ENCODE measurements at regions of chr12 and their contacts with region 1.

Region 1: GRCh38 chr12:3752741-3753486 is at the start of gene CRACR2A:
- DNase-seq: peak; percentile 75 to 85 (median 83)
- ATAC-seq: peak; percentile 90
- H3K4me3 ChIP-seq: peak within 1 kb of the TSS; percentile 77
- H3K4me3 Mint-ChIP-seq: peak within 1 kb of the TSS; percentile 89 to 100 (median 94)
- H3K27ac ChIP-seq: peak within 1 kb of the TSS; percentile 93
- H3K27ac Mint-ChIP-seq: peak within 1 kb of the TSS; percentile 93 to 100 (median 97)
- H3K4me1 ChIP-seq: peaks cover 25 to 34% of the 10 kb centered on the region in 2 donors
- H3K4me1 Mint-ChIP-seq: peaks cover 46 to 70% (median 58%) of the 10 kb centered on the region in 7 donors
- H3K27me3 ChIP-seq: no peaks in the 10 kb centered on the region
- H3K27me3 Mint-ChIP-seq: no peaks in the 10 kb centered on the region
- total RNA-seq, gene CRACR2A: 31.4 to 40.3 (median 39.4) TPM

Region 2: DNA sequence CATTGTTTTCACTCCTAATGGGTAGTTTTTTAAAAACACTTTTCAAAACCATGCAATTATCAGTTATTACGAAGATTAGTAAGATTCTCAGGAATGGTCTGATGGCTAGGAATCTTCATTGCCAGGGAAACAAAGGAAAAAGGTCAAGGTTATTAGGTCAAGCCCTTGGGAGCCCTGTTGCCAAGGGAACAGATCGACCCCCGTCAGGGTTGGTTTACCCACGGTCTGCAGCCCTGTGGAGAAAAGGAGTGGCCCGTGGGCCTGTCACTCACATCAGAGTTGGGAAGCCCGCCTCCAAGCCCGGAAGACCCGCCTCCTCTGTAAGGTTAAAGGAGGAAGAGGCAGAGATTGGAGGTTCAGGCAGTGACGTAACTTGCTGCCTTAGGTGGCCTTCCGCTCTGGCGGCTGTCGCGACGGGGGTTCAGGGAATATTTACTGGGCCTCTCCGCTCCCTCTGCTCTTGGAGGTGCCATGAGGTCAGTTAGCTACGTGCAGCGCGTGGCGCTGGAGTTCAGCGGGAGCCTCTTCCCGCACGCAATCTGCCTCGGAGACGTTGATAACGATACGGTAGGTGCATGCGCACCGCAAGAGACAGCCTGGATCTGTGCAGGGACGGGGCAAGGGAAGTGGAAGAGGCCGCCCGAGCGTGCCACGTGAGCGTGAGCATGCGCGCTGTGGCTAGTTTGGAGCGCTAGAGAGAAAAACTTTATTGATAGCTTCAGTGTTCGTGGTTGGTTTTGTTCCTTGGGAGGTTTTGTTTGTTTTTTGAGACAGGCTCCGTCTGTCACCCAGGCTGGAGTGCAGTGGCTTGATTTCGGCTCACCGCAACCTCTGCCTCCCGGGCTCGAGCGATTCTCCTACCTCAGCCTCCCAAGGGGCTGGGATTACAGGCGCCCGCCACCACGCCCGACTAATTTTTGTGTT is 940.4 kb before region 1 on chr12 and contains the start of gene ITFG2:
- CTCF ChIA-PET with region 1: no interaction called
- POLR2A ChIA-PET with region 1: no interaction called
- intact Hi-C with region 1: loop called in 1 of 2 experiments (anchors 1 kb)
- DNase-seq: peak; percentile 83 to 98 (median 98)
- ATAC-seq: peak; percentile 97
- H3K4me3 ChIP-seq: peak within 1 kb of the TSS; percentile 97
- H3K4me3 Mint-ChIP-seq: peak within 1 kb of the TSS; percentile 81 to 100 (median 99)
- H3K27ac ChIP-seq: peak within 1 kb of the TSS; percentile 88
- H3K27ac Mint-ChIP-seq: peak within 1 kb of the TSS; percentile 97 to 100 (median 100)
- H3K4me1 ChIP-seq: peaks cover 5 to 15% of the 10 kb centered on the region in 2 donors
- H3K4me1 Mint-ChIP-seq: peaks cover 20 to 41% (median 38%) of the 10 kb centered on the region in 7 donors
- H3K27me3 ChIP-seq: no peaks in the 10 kb centered on the region
- H3K27me3 Mint-ChIP-seq: no peaks in the 10 kb centered on the region
- total RNA-seq, gene ITFG2: 50.4 to 156 (median 95.6) TPM

Region 3: GRCh38 chr12:3658327-3659163 is 94.4 kb before region 1 on chr12:
- CTCF ChIA-PET with region 1: no interaction called
- POLR2A ChIA-PET with region 1: interaction called, 3 read pairs
- intact Hi-C with region 1: loop called (anchors 1 to 5 kb)
- DNase-seq: peak in 6 of 9 donors; percentile 12 to 51 (median 35)
- ATAC-seq: peak; percentile 48
- H3K4me3 ChIP-seq: no peak overlapping the region
- H3K4me3 Mint-ChIP-seq: no peak overlapping the region
- H3K27ac ChIP-seq: no peak overlapping the region
- H3K27ac Mint-ChIP-seq: peak overlapping the region in 1 of 9 donors; percentile 58
- H3K4me1 ChIP-seq: no peaks in the 10 kb centered on the region
- H3K4me1 Mint-ChIP-seq: peaks cover 0 to 3% (median 0%) of the 10 kb centered on the region in 7 donors
- H3K27me3 ChIP-seq: no peaks in the 10 kb centered on the region
- H3K27me3 Mint-ChIP-seq: no peaks in the 10 kb centered on the region

Region 4: GRCh38 chr12:3727877-3728632 is 24.9 kb before region 1 on chr12:
- CTCF ChIA-PET with region 1: no interaction called
- POLR2A ChIA-PET with region 1: no interaction called
- intact Hi-C with region 1: loop called (anchors 1 kb)
- DNase-seq: peak in 8 of 9 donors; percentile 17 to 61 (median 36)
- ATAC-seq: peak; percentile 84
- H3K4me3 ChIP-seq: no peak overlapping the region
- H3K4me3 Mint-ChIP-seq: peak overlapping the region in 9 of 10 donors; percentile 34 to 87 (median 52)
- H3K27ac ChIP-seq: no peak overlapping the region
- H3K27ac Mint-ChIP-seq: peak overlapping the region; percentile 52 to 97 (median 79)
- H3K4me1 ChIP-seq: peaks cover 8 to 25% of the 10 kb centered on the region in 2 donors
- H3K4me1 Mint-ChIP-seq: peaks cover 27 to 47% (median 40%) of the 10 kb centered on the region in 7 donors
- H3K27me3 ChIP-seq: no peaks in the 10 kb centered on the region
- H3K27me3 Mint-ChIP-seq: no peaks in the 10 kb centered on the region

Region 5: GRCh38 chr12:4030929-4031702 is 278.2 kb after region 1 on chr12:
- CTCF ChIA-PET with region 1: no interaction called
- POLR2A ChIA-PET with region 1: no interaction called
- intact Hi-C with region 1: loop called in 1 of 2 experiments (anchors 5 kb)
- DNase-seq: peak; percentile 62 to 83 (median 74)
- ATAC-seq: peak; percentile 95
- H3K4me3 ChIP-seq: peak overlapping the region; percentile 50
- H3K4me3 Mint-ChIP-seq: peak overlapping the region; percentile 60 to 87 (median 84)
- H3K27ac ChIP-seq: peak overlapping the region; percentile 75
- H3K27ac Mint-ChIP-seq: peak overlapping the region in 8 of 9 donors; percentile 60 to 92 (median 86)
- H3K4me1 ChIP-seq: peaks cover 13 to 33% of the 10 kb centered on the region in 2 donors
- H3K4me1 Mint-ChIP-seq: peaks cover 22 to 54% (median 47%) of the 10 kb centered on the region in 7 donors
- H3K27me3 ChIP-seq: no peaks in the 10 kb centered on the region
- H3K27me3 Mint-ChIP-seq: peaks cover 0 to 33% (median 0%) of the 10 kb centered on the region in 5 donors

Region 6: DNA sequence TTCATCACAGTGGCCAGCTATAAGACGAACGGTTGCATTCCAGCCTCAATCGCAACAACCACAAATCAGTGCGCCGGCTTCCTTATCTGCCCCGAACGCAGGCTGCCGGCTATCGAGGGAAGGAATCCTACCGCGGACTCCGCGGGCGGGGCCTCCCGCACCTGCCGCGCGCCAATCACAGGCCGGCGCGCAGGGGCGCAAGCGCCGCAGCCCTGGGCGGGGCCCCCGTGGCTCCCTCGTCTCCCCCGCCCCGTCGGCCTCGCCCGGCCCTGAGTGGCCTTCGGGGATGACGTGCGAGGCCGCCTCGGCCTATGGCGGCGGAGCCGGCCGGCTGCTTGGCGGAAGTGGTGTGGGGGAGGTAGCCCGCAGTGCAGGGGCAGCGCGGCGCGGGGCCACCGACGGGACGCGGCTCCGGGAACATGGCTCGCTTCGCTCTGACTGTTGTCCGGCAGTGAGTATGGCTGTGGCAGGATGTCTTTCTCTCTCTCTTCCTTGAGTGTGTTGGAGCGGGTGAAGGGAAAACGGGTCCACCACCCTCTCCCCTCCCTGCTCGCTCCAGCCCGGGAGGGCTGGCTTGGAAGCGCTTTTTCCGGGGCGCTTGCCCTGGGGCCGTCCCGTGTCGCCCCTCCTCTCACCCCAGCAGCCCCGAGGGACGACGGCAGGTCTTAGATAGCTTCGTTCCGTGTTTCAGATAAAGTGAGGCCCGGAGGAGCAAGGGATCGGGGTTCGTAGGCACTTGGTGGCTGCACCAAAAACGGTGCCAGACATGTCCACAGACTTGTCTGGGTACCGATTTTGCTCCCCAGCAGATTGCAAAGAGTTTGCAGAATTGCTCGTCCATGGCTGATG is 568.2 kb after region 1 on chr12 and contains the start of gene TIGAR:
- CTCF ChIA-PET with region 1: no interaction called
- POLR2A ChIA-PET with region 1: no interaction called
- intact Hi-C with region 1: loop called in 1 of 2 experiments (anchors 2 kb)
- DNase-seq: peak; percentile 86 to 97 (median 90)
- ATAC-seq: peak; percentile 99
- H3K4me3 ChIP-seq: peak within 1 kb of the TSS; percentile 85
- H3K4me3 Mint-ChIP-seq: peak within 1 kb of the TSS; percentile 83 to 97 (median 95)
- H3K27ac ChIP-seq: peak within 1 kb of the TSS; percentile 84
- H3K27ac Mint-ChIP-seq: peak within 1 kb of the TSS; percentile 74 to 96 (median 92)
- H3K4me1 ChIP-seq: peaks cover 14 to 15% of the 10 kb centered on the region in 2 donors
- H3K4me1 Mint-ChIP-seq: peaks cover 21 to 53% (median 46%) of the 10 kb centered on the region in 7 donors
- H3K27me3 ChIP-seq: no peaks in the 10 kb centered on the region
- H3K27me3 Mint-ChIP-seq: no peaks in the 10 kb centered on the region
- total RNA-seq, gene TIGAR: 7.1 to 15.8 (median 11.1) TPM